MCF 10A (cell line): ENCODE measurements at regions of chr2 and their contacts with region 1.

Region 1: DNA sequence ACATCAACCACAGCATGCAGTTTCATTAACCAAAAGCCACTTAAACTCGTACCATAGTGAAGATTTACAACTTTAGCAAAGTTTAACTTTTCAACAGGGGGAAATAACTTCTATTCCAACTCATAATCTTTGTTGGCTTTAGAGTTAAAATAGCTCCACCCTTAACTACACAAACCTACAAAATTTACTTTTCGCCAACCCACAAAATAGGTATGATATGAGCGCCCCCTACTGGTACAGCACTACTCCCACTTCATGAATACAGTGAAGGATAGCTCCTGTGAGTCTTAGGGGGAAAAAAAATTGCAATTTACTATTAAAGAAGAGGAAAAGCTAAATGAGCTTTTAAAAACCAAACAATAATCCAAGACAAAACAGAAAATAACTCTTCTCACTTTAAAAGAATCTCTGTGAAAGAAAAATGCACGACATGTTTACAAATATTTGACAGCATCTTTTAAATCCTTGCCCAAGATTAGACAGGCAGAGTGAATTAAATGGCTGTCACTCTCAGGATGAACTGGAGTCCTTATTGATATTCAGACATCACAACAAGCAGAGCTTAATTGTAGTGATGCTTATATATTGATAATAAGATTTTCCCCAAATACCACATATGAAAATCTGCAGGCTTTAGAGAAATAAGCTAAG is 32.2 kb downstream of the TMEFF2 start:
- DNase-seq: peak; percentile 76
- H3K4me3 Mint-ChIP-seq: no peak overlapping the region
- H3K27ac Mint-ChIP-seq: no peak overlapping the region
- H3K4me1 Mint-ChIP-seq: peaks cover 9% of the 10 kb centered on the region
- H3K27me3 Mint-ChIP-seq: no peaks in the 10 kb centered on the region
- CTCF ChIP-seq: peak; percentile 85

Region 2: GRCh38 chr2:191544461-191545062 is 618.0 kb before region 1 on chr2:
- CTCF ChIA-PET with region 1: interaction called, 17 read pairs
- POLR2A ChIA-PET with region 1: no interaction called
- intact Hi-C with region 1: no loop called
- DNase-seq: no peak
- H3K4me3 Mint-ChIP-seq: no peak overlapping the region
- H3K27ac Mint-ChIP-seq: no peak overlapping the region
- H3K4me1 Mint-ChIP-seq: no peaks in the 10 kb centered on the region
- H3K27me3 Mint-ChIP-seq: no peaks in the 10 kb centered on the region
- CTCF ChIP-seq: no peak

Region 3: GRCh38 chr2:191566344-191566743 is 596.2 kb before region 1 on chr2:
- CTCF ChIA-PET with region 1: interaction called, 21 read pairs
- POLR2A ChIA-PET with region 1: no interaction called
- intact Hi-C with region 1: loop called (anchors 1 kb)
- DNase-seq: peak; percentile 80
- H3K4me3 Mint-ChIP-seq: no peak overlapping the region
- H3K27ac Mint-ChIP-seq: no peak overlapping the region
- H3K4me1 Mint-ChIP-seq: no peaks in the 10 kb centered on the region
- H3K27me3 Mint-ChIP-seq: no peaks in the 10 kb centered on the region
- CTCF ChIP-seq: peak; percentile 76

Region 4: DNA sequence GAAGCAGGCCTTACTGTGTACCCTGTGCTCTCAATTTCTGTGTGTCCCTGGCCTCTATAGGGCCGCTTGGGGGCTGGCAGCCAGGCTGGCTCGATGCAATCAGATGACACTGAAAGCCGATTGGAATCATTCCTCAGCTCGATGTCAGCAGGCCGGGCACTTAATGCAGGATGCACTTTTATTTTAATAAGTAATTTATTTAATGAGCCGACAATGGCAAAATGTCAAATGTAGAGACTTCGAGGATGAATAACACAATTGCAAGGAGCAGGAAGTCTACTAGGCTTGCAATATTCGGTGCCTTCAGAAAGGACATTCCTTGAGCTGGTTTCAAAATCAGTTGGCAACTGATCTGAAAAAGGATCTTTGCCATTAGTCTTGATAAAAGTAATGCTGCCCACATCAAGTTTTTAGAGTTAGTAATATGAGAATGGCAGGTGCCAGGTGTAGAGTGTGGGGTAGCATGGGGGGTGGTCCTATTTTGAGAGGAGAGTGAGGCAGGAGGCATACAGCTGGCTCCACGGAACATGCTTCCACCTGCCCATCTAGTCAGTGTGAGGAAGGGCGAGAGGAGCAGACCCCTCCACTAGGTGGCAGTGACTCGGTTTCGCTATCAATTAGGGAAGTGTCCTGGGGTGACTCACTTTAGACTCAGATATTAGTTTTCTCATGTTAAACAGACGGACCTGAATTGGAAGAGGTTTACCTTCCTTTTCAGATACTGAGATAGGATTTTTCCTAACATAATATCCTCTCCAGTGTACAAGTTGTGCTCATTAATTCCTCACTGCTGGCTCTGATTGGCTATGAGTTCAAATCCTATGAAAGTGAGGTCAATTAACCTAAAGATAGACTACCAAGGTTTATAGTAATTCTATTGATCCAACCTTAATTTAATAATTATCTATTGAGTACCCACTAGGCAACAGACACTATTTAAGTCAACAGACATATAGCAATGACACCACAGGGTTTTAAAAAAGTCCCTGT is 403.7 kb before region 1 on chr2:
- CTCF ChIA-PET with region 1: interaction called, 8 read pairs
- POLR2A ChIA-PET with region 1: no interaction called
- intact Hi-C with region 1: loop called (anchors 2 kb)
- DNase-seq: peak; percentile 82
- H3K4me3 Mint-ChIP-seq: peak overlapping the region; percentile 53
- H3K27ac Mint-ChIP-seq: no peak overlapping the region
- H3K4me1 Mint-ChIP-seq: peaks cover 6% of the 10 kb centered on the region
- H3K27me3 Mint-ChIP-seq: no peaks in the 10 kb centered on the region
- CTCF ChIP-seq: peak; percentile 57

Region 5: DNA sequence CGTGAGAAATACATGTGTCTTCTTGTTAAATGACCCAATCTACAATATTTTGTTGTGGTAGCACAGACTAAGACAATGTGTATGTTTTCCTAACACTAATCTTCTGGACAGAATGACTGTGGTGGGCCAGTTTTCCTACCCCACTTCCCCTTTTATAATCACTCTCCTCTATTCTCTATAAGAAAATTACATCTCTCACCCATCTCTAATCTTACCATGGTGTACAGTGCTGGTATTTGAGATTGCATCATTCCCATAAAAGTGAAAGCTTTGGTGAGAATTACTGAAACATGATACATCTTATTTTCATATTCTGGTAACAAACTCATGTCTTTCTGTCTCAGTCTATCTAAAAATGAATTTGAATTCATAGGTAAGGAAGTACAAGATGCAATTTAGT is 356.1 kb before region 1 on chr2:
- CTCF ChIA-PET with region 1: interaction called, 342 read pairs
- POLR2A ChIA-PET with region 1: interaction called, 25 read pairs
- intact Hi-C with region 1: no loop called
- DNase-seq: peak; percentile 14
- H3K4me3 Mint-ChIP-seq: no peak overlapping the region
- H3K27ac Mint-ChIP-seq: no peak overlapping the region
- H3K4me1 Mint-ChIP-seq: no peaks in the 10 kb centered on the region
- H3K27me3 Mint-ChIP-seq: no peaks in the 10 kb centered on the region
- CTCF ChIP-seq: no peak

Region 6: GRCh38 chr2:191846515-191847476 is 315.7 kb before region 1 on chr2 and contains the start of gene CAVIN2:
- CTCF ChIA-PET with region 1: interaction called, 24 read pairs
- POLR2A ChIA-PET with region 1: interaction called, 9 read pairs
- intact Hi-C with region 1: no loop called
- DNase-seq: peak; percentile 95
- H3K4me3 Mint-ChIP-seq: peak within 1 kb of the TSS; percentile 90
- H3K27ac Mint-ChIP-seq: peak within 1 kb of the TSS; percentile 86
- H3K4me1 Mint-ChIP-seq: peaks cover 35% of the 10 kb centered on the region
- H3K27me3 Mint-ChIP-seq: no peaks in the 10 kb centered on the region
- CTCF ChIP-seq: no peak
- total RNA-seq, gene CAVIN2: 14.7 and 16.4 TPM in 2 replicates

Region 7: DNA sequence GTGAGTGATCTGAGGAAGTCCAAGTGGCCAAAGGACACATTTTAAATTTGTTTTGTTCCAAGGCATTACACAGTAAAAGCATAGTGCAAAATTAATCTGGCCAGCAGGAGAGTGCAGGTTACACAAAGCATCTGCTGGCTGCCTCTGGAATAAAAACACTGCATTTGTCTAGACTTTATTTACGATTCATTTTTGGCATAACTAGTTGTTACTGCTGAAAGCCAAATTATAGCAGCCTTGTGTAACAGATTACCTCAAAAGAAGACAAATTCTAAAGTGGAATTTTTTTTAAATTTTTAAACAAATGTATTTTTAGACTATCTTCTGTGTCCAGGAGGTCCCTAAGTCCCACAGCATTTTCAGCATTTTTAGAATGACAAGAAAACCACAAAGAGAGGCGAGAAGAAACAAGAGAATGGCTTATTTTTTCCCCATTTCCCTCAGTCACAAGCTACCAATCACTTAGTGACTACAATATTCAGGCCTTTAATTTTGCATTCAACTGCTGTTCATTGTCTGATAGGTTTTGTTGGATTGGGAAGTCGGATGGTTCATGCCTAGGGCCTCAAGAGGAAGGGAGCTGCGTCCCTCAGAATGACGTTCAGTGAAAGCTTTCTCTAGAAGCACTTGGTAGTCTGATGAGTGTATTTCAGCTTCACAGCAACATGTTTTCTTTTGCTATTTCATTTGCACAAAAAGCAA is 13.7 kb before region 1 on chr2:
- CTCF ChIA-PET with region 1: interaction called, 20 read pairs
- POLR2A ChIA-PET with region 1: no interaction called
- intact Hi-C with region 1: no loop called
- DNase-seq: no peak
- H3K4me3 Mint-ChIP-seq: no peak overlapping the region
- H3K27ac Mint-ChIP-seq: no peak overlapping the region
- H3K4me1 Mint-ChIP-seq: peaks cover 9% of the 10 kb centered on the region
- H3K27me3 Mint-ChIP-seq: no peaks in the 10 kb centered on the region
- CTCF ChIP-seq: no peak

Region 8: DNA sequence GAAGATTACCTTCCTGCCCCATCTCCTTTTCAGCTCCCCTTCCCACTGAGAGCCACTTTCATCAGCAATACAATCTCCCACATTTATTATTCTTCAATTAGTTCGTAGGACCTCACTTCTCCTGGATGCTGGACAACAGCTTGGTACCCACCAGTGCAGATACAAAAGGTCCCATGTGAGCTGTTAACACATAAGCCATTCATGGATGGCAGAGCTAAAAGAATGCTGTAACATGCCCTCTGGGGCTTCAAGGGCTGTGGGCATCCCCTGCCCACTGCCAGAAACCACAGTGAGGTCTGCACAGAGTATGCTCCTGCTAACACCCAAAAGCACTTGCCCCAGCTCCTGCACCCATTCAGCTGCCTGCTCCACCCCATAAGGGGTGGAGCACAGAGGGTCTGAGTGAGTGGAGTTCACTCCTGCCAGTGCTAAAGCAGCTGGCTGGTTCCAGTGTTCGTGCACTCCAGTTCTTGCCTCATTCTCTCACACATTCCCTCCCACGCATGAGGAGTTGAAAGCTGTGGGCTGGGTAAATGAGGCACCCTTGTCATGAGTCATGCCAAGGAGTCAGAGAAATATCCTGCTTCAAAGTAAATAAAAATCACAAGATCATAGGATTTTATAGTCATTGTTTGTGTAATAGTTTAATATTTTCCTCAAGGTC is 338.2 kb after region 1 on chr2:
- CTCF ChIA-PET with region 1: no interaction called
- POLR2A ChIA-PET with region 1: no interaction called
- intact Hi-C with region 1: no loop called
- DNase-seq: peak; percentile 96
- H3K4me3 Mint-ChIP-seq: no peak overlapping the region
- H3K27ac Mint-ChIP-seq: no peak overlapping the region
- H3K4me1 Mint-ChIP-seq: peaks cover 13% of the 10 kb centered on the region
- H3K27me3 Mint-ChIP-seq: no peaks in the 10 kb centered on the region
- CTCF ChIP-seq: no peak